ENCODE measurements at regions of chr16 and their contacts with region 1.

Region 1: DNA sequence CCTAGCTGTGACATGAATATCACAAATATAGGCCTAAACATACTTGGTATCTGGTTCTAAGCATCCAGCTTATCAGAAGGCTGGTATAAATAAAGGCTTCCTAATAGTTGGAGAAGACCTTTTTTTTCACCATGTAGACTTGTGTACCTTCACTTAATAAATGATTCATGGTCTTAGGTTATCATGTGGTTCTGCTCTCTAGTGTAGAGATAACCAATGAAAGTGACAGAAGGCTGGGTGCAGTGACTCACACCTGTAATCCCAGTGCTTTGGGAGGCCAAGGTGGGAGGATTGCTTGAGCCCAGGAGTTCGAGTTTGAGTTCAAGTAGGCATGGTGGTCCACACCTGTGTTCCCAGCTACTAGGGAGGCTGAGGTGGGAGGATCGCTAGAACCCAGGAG is 3.1 kb downstream of the DDX19A start:
- DNase-seq: no peak
- H3K4me3 Mint-ChIP-seq: no peak overlapping the region
- H3K27ac Mint-ChIP-seq: no peak overlapping the region
- H3K4me1 Mint-ChIP-seq: peaks cover 38% of the 10 kb centered on the region
- H3K27me3 Mint-ChIP-seq: no peaks in the 10 kb centered on the region

Region 2: DNA sequence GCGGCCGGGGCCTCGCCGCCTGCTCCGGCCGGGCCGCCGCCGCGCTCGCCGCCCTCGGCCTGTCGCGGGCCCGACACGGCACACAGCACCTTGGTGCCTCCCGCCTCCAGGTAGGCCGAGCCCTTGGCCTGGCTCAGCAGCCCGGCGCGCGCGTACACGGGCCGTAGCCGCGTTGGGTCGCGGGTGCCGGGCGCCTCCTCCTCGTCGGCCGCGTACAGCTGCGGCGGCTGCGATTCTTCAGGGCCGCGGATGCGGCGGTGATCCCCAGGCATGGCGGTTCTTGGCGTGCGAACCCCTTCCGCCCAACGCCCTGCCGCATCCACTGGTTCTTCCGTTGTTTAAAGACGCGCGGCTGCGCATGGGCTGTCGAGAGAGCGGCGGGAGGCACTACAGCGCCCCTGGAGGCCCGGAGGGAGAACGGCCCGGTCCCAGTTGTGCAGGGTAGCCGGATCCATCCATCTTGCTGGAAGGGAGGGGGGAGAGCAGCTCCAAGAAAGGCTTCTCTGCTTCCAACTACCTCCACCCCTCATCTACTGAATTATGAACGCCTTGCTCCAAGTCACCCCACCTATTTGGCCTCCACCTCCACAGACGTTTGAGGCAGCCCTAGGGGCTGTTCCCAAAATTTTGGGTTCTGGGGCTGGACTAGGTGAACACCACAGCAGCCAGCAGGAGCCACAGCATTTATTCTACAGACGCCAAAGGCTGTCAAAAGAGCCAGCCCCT is 98.0 kb before region 1 on chr16 and contains the start of gene EXOSC6:
- CTCF ChIA-PET with region 1: no interaction called
- POLR2A ChIA-PET with region 1: interaction called, 15 read pairs
- DNase-seq: peak; percentile 95
- H3K4me3 Mint-ChIP-seq: peak within 1 kb of the TSS; percentile 84
- H3K27ac Mint-ChIP-seq: peak within 1 kb of the TSS; percentile 88
- H3K4me1 Mint-ChIP-seq: peaks cover 20% of the 10 kb centered on the region
- H3K27me3 Mint-ChIP-seq: no peaks in the 10 kb centered on the region
- total RNA-seq, gene EXOSC6: 24.3 to 24.4 TPM

Region 3: DNA sequence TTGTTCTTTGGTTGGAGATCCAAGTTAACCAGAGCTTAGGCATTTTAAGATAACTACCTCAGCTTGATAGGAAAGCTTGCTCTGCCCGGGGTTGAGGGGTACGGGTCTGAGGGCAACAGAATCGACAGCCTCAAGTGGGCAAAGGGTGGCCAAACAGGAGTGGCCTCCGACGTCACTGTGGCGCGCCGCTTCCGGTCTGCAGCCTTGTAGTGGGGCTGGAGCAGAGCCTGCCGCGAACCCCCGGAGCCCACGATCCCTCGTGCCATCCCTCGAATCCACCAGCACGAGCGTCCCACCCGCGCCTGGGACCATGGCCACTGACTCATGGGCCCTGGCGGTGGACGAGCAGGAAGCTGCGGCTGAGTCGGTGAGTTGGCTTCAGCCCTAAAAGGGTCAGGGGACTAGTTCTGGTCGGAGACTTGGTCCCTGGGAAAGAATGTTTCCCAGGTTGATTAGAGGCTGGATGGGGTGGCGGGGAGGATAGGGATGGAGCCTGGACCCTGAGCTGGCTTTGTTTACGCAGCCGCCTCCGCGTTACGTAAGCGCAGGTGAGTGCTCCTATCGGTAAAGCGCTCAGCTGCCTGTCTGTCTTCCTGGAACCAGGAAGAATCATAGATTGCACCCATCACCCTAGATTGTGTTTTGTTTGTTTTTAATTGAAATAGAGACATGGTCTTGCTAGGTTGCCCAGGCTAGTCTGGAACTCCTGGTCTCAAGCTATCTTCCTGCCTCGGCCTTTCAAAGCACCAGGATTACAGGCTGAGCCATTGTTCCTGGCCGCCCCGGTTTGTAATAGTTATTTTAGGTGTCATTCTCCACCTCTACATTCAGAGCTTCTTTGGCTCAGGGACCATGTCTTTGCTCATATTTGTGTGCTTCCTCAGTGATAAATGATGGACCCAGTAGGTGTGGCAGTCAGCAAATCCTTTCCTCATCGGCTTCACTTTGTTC is 50.5 kb before region 1 on chr16 and contains the start of gene DDX19B:
- CTCF ChIA-PET with region 1: interaction called, 14 read pairs
- POLR2A ChIA-PET with region 1: interaction called, 49 read pairs
- DNase-seq: peak; percentile 75
- H3K4me3 Mint-ChIP-seq: peak within 1 kb of the TSS; percentile 81
- H3K27ac Mint-ChIP-seq: peak within 1 kb of the TSS; percentile 88
- H3K4me1 Mint-ChIP-seq: peaks cover 36% of the 10 kb centered on the region
- H3K27me3 Mint-ChIP-seq: no peaks in the 10 kb centered on the region
- total RNA-seq, gene DDX19B: 33.2 to 35.8 TPM

Region 4: DNA sequence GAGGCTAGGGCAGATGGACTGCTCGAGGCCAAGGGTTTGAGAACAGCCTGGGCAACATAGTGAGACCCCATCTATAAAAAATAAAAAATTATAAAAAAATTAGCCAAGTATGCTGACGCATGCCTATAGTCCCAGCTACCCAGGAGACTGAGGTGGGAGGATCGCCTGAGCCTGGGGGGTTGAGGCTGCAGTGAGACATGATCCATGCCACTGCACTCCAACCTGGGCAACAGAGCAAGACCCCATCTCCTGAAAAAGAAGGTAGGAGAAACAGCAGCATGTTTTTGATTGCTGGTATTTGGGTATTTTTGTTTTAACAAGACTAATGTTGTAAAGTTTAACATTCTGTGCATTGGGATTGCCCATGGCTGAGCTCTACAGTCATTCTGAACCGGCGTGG is 12.0 kb before region 1 on chr16:
- CTCF ChIA-PET with region 1: interaction called, 3 read pairs
- POLR2A ChIA-PET with region 1: interaction called, 14 read pairs
- DNase-seq: no peak
- H3K4me3 Mint-ChIP-seq: no peak overlapping the region
- H3K27ac Mint-ChIP-seq: no peak overlapping the region
- H3K4me1 Mint-ChIP-seq: no peaks in the 10 kb centered on the region
- H3K27me3 Mint-ChIP-seq: no peaks in the 10 kb centered on the region

Region 5: GRCh38 chr16:70438969-70439862 is 89.4 kb after region 1 on chr16 and contains the start of gene ST3GAL2:
- CTCF ChIA-PET with region 1: interaction called, 4 read pairs
- POLR2A ChIA-PET with region 1: interaction called, 13 read pairs
- DNase-seq: peak; percentile 96
- H3K4me3 Mint-ChIP-seq: peak within 1 kb of the TSS; percentile 88
- H3K27ac Mint-ChIP-seq: peak within 1 kb of the TSS; percentile 74
- H3K4me1 Mint-ChIP-seq: peaks cover 29% of the 10 kb centered on the region
- H3K27me3 Mint-ChIP-seq: no peaks in the 10 kb centered on the region
- total RNA-seq, gene ST3GAL2: 21.6 to 22.7 TPM

Region 6: GRCh38 chr16:70467113-70468034 is 117.6 kb after region 1 on chr16:
- CTCF ChIA-PET with region 1: no interaction called
- POLR2A ChIA-PET with region 1: no interaction called
- DNase-seq: no peak
- H3K4me3 Mint-ChIP-seq: no peak overlapping the region
- H3K27ac Mint-ChIP-seq: no peak overlapping the region
- H3K4me1 Mint-ChIP-seq: no peaks in the 10 kb centered on the region
- H3K27me3 Mint-ChIP-seq: no peaks in the 10 kb centered on the region

Measured in activated CD4-positive, alpha-beta memory T cell treated with anti-CD3 and anti-CD28 coated beads, Interleukin-2, amount 10 ng/mL, durations not matched to agents 7 days and 5 days (primary cell).